ENCODE measurements at regions of chr10 and their contacts with region 1.

Region 1: GRCh38 chr10:16843252-16843870 is 26.1 kb upstream of the RSU1 start:
- DNase-seq: no peak
- H3K4me3 ChIP-seq: no peak overlapping the region
- H3K27ac ChIP-seq: no peak overlapping the region
- H3K4me1 ChIP-seq: no peaks in the 10 kb centered on the region
- H3K27me3 ChIP-seq: no peaks in the 10 kb centered on the region
- CTCF ChIP-seq: peak in 2 of 3 experiments; percentile 44 to 75
- POLR2A ChIP-seq: no peak

Region 2: DNA sequence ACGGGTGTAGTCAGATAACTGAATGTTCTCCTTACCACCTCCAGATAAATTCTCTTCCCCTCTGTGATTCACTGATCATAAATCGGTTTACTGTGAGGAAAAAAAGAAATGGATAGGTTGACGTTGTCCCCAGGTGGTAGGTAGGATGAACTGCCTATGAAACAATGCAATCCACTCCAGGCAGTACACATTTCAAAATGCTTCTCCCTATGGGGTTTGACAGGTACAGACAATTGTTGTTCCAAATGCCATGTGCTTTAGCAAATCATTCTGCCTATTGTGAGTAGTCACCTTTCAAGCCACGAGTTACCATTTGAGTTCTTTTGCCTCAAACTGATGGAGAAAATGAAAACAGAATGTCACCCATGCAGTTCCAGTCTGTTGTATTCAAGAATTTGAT is 406.5 kb after region 1 on chr10:
- intact Hi-C with region 1: loop called (anchors 5 kb)
- DNase-seq: no peak
- H3K4me3 ChIP-seq: no peak overlapping the region
- H3K27ac ChIP-seq: no peak overlapping the region
- H3K4me1 ChIP-seq: no peaks in the 10 kb centered on the region
- H3K27me3 ChIP-seq: no peaks in the 10 kb centered on the region
- CTCF ChIP-seq: peak in 1 of 3 experiments; percentile 13
- POLR2A ChIP-seq: no peak

Measured in vagina (tissue), 2 donors.